ENCODE measurements at regions of chr18 and their contacts with region 1.

Region 1: DNA sequence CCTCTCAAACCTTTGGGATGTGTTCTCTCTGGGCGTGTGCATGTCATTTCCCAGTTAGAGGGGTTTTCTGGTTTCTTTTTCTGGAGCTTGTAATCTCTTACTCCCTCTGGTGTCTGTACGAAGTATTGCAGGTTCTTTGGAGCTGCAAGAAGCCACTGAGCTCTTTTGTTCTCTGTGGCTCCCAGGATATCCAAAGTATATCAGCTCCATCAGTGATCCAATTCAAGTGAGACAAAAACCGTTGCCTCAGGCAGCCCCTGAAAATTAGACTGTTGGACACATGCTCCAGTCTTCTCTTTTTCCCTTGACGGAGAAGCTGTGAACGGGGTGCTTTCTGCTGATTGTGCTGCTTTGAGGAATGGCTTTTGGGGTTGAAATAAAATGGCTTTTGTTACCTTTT is 59.0 kb upstream of the LDLRAD4 start:
- DNase-seq: no peak
- ATAC-seq: peak; percentile 55
- H3K4me3 Mint-ChIP-seq: no peak overlapping the region
- H3K27ac Mint-ChIP-seq: no peak overlapping the region
- H3K4me1 Mint-ChIP-seq: peaks cover 2% of the 10 kb centered on the region
- H3K27me3 Mint-ChIP-seq: peaks cover 2% of the 10 kb centered on the region

Region 2: GRCh38 chr18:11649839-11650238 is 1509.7 kb before region 1 on chr18:
- CTCF ChIA-PET with region 1: no interaction called
- POLR2A ChIA-PET with region 1: no interaction called
- intact Hi-C with region 1: no loop called
- DNase-seq: no peak
- ATAC-seq: no peak
- H3K4me3 Mint-ChIP-seq: no peak overlapping the region
- H3K27ac Mint-ChIP-seq: no peak overlapping the region
- H3K4me1 Mint-ChIP-seq: no peaks in the 10 kb centered on the region
- H3K27me3 Mint-ChIP-seq: peaks cover 19% of the 10 kb centered on the region

Region 3: GRCh38 chr18:12391618-12392165 is 767.9 kb before region 1 on chr18:
- CTCF ChIA-PET with region 1: no interaction called
- POLR2A ChIA-PET with region 1: no interaction called
- intact Hi-C with region 1: loop called in 1 of 2 experiments (anchors 5 kb)
- DNase-seq: peak; percentile 72
- ATAC-seq: peak; percentile 97
- H3K4me3 Mint-ChIP-seq: no peak overlapping the region
- H3K27ac Mint-ChIP-seq: no peak overlapping the region
- H3K4me1 Mint-ChIP-seq: no peaks in the 10 kb centered on the region
- H3K27me3 Mint-ChIP-seq: peaks cover 6% of the 10 kb centered on the region

Region 4: GRCh38 chr18:12726774-12727550 is 432.6 kb before region 1 on chr18:
- CTCF ChIA-PET with region 1: interaction called, 11 read pairs
- POLR2A ChIA-PET with region 1: no interaction called
- intact Hi-C with region 1: loop called (anchors 1 to 10 kb)
- DNase-seq: peak; percentile 66
- ATAC-seq: peak; percentile 73
- H3K4me3 Mint-ChIP-seq: no peak overlapping the region
- H3K27ac Mint-ChIP-seq: no peak overlapping the region
- H3K4me1 Mint-ChIP-seq: peaks cover 3% of the 10 kb centered on the region
- H3K27me3 Mint-ChIP-seq: no peaks in the 10 kb centered on the region

Region 5: DNA sequence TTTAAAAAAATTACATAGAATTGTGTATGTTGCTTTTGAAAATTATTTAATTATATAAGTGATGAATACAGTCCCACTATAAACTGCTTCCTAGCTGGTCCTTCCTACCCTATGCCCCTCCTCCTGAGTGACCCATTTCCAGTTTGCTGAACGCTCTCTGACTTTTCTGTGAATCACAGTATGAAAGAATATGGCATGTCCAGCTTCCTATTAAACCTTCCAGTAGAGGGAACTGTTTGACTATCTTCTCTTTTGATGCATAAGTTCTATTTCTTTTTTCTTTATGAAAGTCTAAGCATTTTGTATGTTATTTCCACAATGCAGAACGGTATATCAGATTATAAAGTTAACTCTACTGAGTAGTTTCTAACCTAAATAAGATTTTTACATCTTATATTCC is 415.5 kb before region 1 on chr18:
- CTCF ChIA-PET with region 1: no interaction called
- POLR2A ChIA-PET with region 1: no interaction called
- intact Hi-C with region 1: loop called in 1 of 2 experiments (anchors 5 kb)
- DNase-seq: no peak
- ATAC-seq: peak; percentile 78
- H3K4me3 Mint-ChIP-seq: no peak overlapping the region
- H3K27ac Mint-ChIP-seq: no peak overlapping the region
- H3K4me1 Mint-ChIP-seq: peaks cover under 1% of the 10 kb centered on the region
- H3K27me3 Mint-ChIP-seq: no peaks in the 10 kb centered on the region

Region 6: GRCh38 chr18:13003466-13003896 is 156.1 kb before region 1 on chr18:
- CTCF ChIA-PET with region 1: interaction called, 4 read pairs
- POLR2A ChIA-PET with region 1: no interaction called
- intact Hi-C with region 1: loop called in 1 of 2 experiments (anchors 1 kb)
- DNase-seq: peak; percentile 39
- ATAC-seq: peak; percentile 37
- H3K4me3 Mint-ChIP-seq: no peak overlapping the region
- H3K27ac Mint-ChIP-seq: no peak overlapping the region
- H3K4me1 Mint-ChIP-seq: peaks cover 19% of the 10 kb centered on the region
- H3K27me3 Mint-ChIP-seq: no peaks in the 10 kb centered on the region

Region 7: DNA sequence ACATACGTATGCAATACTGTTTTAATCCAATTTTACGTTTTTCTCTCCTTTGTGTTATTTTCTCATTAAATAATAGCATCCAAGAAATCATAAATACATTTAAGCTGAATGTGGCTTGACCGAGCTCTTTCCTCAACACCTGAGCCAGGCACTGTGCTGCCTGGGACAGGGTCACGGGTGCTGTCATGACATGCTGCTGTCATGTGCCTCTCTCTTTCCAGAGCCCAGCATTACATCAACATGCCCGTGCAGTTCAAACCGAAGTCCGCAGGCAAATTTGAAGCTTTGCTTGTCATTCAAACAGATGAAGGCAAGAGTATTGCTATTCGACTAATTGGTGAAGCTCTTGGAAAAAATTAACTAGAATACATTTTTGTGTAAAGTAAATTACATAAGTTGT is 35.2 kb before region 1 on chr18:
- CTCF ChIA-PET with region 1: interaction called, 20 read pairs
- POLR2A ChIA-PET with region 1: no interaction called
- intact Hi-C with region 1: no loop called
- DNase-seq: no peak
- ATAC-seq: no peak
- H3K4me3 Mint-ChIP-seq: no peak overlapping the region
- H3K27ac Mint-ChIP-seq: no peak overlapping the region
- H3K4me1 Mint-ChIP-seq: no peaks in the 10 kb centered on the region
- H3K27me3 Mint-ChIP-seq: no peaks in the 10 kb centered on the region

Region 8: GRCh38 chr18:13175754-13176210 is 16.2 kb after region 1 on chr18:
- CTCF ChIA-PET with region 1: interaction called, 11 read pairs
- POLR2A ChIA-PET with region 1: no interaction called
- intact Hi-C with region 1: no loop called
- DNase-seq: peak; percentile 52
- ATAC-seq: peak; percentile 68
- H3K4me3 Mint-ChIP-seq: no peak overlapping the region
- H3K27ac Mint-ChIP-seq: peak overlapping the region; percentile 37
- H3K4me1 Mint-ChIP-seq: peaks cover 34% of the 10 kb centered on the region
- H3K27me3 Mint-ChIP-seq: no peaks in the 10 kb centered on the region

Measured in activated CD4-positive, alpha-beta T cell treated with anti-CD3 and anti-CD28 coated beads for 36 hours (primary cell).